Prostate gland (tissue), 2 donors: ENCODE measurements at regions of chr10 and their contacts with region 1.

Region 1: DNA sequence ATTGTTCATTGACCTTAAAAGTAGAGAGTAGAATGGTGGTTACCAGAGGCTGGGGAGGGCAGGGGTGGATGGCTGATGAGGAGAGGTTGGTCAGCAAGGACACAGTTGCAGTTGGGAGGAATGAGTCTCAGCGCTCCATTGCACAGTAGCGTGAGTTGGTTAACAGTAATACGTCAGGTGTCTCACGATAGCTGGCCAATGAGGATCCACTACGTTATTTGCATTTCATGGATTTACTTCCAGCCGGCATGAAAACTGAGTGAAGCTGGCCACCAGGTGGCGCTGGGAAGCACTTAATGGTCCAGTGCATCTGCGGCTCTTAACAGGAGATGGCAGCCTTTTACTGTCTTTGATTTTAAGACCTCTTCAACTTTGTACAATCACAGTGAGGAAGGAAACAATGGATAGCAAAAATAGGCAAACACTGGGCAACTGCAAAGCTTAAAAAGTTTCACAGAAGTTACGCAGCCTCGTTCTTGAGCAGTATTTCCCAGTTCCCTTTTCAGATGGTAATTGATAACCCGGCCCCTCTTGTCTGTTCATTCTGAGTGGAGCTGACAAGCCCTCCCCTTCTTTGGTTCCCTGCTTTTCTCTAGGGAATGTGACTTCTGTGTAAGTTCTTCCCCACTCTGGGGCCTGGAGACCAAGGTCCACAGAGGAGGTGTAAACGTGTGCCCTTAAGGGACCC is 23.7 kb downstream of the AKR1E2 start:
- DNase-seq: peak; percentile 88
- H3K4me3 ChIP-seq: no peak overlapping the region
- H3K27ac ChIP-seq: no peak overlapping the region
- H3K4me1 ChIP-seq: no peaks in the 10 kb centered on the region
- H3K27me3 ChIP-seq: no peaks in the 10 kb centered on the region
- CTCF ChIP-seq: peak; percentile 95 to 100 (median 99)
- POLR2A ChIP-seq: no peak

Region 2: GRCh38 chr10:4740471-4740870 is 109.2 kb before region 1 on chr10:
- intact Hi-C with region 1: no loop called
- DNase-seq: no peak
- H3K4me3 ChIP-seq: no peak overlapping the region
- H3K27ac ChIP-seq: no peak overlapping the region
- H3K4me1 ChIP-seq: no peaks in the 10 kb centered on the region
- H3K27me3 ChIP-seq: no peaks in the 10 kb centered on the region
- CTCF ChIP-seq: no peak
- POLR2A ChIP-seq: no peak

Region 3: GRCh38 chr10:4941540-4942330 is 92.0 kb after region 1 on chr10:
- intact Hi-C with region 1: loop called (anchors 5 kb)
- DNase-seq: no peak
- H3K4me3 ChIP-seq: no peak overlapping the region
- H3K27ac ChIP-seq: peak overlapping the region in 1 of 2 donors; percentile 16
- H3K4me1 ChIP-seq: no peaks in the 10 kb centered on the region
- H3K27me3 ChIP-seq: no peaks in the 10 kb centered on the region
- CTCF ChIP-seq: no peak
- POLR2A ChIP-seq: no peak

Region 4: GRCh38 chr10:4981722-4982471 is 132.2 kb after region 1 on chr10:
- intact Hi-C with region 1: loop called (anchors 5 kb)
- DNase-seq: no peak
- H3K4me3 ChIP-seq: no peak overlapping the region
- H3K27ac ChIP-seq: no peak overlapping the region
- H3K4me1 ChIP-seq: no peaks in the 10 kb centered on the region
- H3K27me3 ChIP-seq: no peaks in the 10 kb centered on the region
- CTCF ChIP-seq: peak in 2 of 4 experiments; percentile 19 to 38
- POLR2A ChIP-seq: no peak

Region 5: GRCh38 chr10:5094265-5095205 is 244.8 kb after region 1 on chr10 and contains the start of gene AKR1C3:
- intact Hi-C with region 1: loop called (anchors 2 kb)
- DNase-seq: no peak
- H3K4me3 ChIP-seq: peak within 1 kb of the TSS; percentile 12 to 14
- H3K27ac ChIP-seq: no peak within 1 kb of the TSS
- H3K4me1 ChIP-seq: no peaks in the 10 kb centered on the region
- H3K27me3 ChIP-seq: no peaks in the 10 kb centered on the region
- CTCF ChIP-seq: peak in 3 of 4 experiments; percentile 50 to 76 (median 67)
- POLR2A ChIP-seq: no peak
- total RNA-seq, gene AKR1C3: 6.5 to 12.8 TPM

Region 6: GRCh38 chr10:5283305-5284158 is 433.8 kb after region 1 on chr10:
- intact Hi-C with region 1: loop called (anchors 1 kb)
- DNase-seq: peak; percentile 31
- H3K4me3 ChIP-seq: no peak overlapping the region
- H3K27ac ChIP-seq: no peak overlapping the region
- H3K4me1 ChIP-seq: no peaks in the 10 kb centered on the region
- H3K27me3 ChIP-seq: peaks cover 3% of the 10 kb centered on the region
- CTCF ChIP-seq: peak in 3 of 4 experiments; percentile 65 to 66 (median 66)
- POLR2A ChIP-seq: no peak

Region 7: DNA sequence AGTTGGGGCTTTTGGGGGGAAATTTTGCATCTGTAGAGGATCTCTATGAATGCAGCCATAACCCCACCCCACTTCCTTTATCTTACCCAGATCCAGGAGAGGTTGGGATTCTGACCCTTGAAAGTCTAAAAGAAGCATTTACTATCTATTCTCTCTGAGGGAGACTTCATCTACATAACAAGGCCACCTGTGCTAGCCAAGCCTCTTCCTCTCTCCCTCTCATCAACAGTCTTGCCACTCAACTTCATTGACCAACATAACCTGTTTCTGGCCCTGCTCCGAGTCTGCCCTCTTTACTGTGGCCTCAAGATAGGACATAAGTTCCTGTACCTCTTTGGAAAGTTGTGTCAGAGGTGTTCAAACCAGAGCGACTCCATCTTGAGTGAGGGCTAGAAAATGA is 535.5 kb after region 1 on chr10:
- intact Hi-C with region 1: loop called (anchors 5 kb)
- DNase-seq: no peak
- H3K4me3 ChIP-seq: no peak overlapping the region
- H3K27ac ChIP-seq: no peak overlapping the region
- H3K4me1 ChIP-seq: no peaks in the 10 kb centered on the region
- H3K27me3 ChIP-seq: no peaks in the 10 kb centered on the region
- CTCF ChIP-seq: no peak
- POLR2A ChIP-seq: no peak